HEK293 (cell line): ENCODE measurements at regions of chr22 and their contacts with region 1.

Region 1: DNA sequence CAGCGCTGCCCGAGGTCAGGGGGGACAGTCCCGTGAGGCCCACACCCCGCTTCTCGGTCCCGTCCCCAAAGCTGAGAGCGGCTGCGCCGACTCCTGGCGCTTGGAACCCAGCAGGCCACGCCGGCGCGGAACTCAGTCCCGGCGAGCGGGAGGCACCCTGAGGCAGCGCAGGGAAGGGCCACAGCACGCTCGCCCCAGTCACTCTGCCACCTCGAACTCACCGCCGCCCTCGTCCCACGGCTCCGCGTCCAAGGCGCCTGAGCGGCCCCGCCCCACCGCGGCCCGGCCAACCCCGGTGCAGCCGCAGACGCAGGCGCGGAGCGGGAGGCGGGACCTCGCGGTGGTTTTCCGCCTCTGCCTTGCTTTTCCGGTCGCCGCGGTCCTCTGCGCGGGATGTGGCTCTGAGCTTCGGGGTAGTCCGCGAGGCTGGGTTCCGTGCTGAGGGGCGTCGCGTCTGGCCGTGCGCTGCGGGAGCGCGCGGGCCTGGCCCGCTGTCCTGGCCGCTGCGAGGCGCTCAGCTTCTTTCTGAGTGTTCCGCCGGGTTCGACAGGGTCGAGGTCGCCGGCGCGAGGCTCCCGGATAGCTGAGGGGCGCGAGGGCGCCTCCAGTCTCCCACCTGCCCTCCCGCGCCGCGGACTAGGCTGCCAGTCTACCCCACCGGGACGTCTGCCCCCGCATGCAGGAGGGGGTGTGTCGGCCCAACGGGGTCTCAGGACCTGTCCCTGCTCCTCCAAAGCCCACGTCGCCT is at the start of gene CDPF1:
- H3K4me3 ChIP-seq: peak within 1 kb of the TSS; percentile 84
- H3K27ac ChIP-seq: peak within 1 kb of the TSS; percentile 90
- H3K4me1 ChIP-seq: peaks cover 3% of the 10 kb centered on the region; the same call in 1 of the 2 replicates
- CTCF ChIP-seq: peak; percentile 77

Region 2: GRCh38 chr22:46229701-46230100 is 20.5 kb before region 1 on chr22:
- CTCF ChIA-PET with region 1: no interaction called
- POLR2A ChIA-PET with region 1: no interaction called
- H3K4me3 ChIP-seq: no peak overlapping the region
- H3K27ac ChIP-seq: no peak overlapping the region
- H3K4me1 ChIP-seq: peaks cover 5% of the 10 kb centered on the region; the same call in 1 of the 2 replicates
- CTCF ChIP-seq: no peak

Region 3: DNA sequence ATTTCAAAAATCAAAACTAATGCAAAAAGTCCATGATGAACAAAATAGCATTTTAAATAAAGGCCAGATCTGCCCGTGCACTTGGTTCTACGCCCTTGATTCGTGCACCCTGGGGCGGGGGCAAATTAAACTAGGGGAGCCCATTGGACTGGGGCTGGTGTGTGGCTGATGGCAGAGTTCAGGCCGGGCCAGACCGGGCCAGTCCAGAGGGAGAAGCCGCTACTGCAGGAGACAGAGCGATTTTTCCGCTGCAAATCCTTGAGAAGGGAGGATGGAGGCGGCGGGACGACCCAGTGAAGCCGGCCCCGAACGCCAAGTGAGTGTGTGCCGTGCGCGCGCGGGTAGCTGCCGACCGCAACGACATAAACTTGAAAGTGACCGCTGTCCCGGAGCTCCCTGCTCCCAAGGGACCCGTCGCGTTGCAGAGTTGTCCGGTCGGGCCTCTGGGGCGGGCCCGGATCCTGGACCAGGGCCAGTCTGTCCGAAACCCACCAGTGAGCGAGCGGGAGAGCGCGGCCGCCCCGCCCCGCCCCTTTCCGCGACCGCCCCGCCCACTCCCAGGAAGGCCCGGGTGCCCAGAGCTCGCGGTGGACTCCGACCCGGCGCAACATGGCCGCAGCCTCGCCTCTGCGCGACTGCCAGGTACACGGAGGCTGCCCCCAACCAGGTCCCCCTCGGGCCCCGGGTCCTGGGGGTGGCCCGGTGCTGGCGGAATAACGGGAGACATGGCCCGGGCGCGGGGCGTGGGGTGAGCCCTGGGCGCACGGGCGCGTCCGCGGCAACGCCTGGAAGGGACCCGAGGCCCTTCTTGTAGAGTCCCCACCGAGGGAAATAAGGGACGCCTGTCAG is 17.4 kb after region 1 on chr22 and contains the start of gene TTC38:
- CTCF ChIA-PET with region 1: interaction called, 7 read pairs
- POLR2A ChIA-PET with region 1: interaction called, 33 read pairs
- H3K4me3 ChIP-seq: peak within 1 kb of the TSS; percentile 86
- H3K27ac ChIP-seq: peak within 1 kb of the TSS; percentile 54
- H3K4me1 ChIP-seq: no peaks in the 10 kb centered on the region
- CTCF ChIP-seq: no peak